ENCODE measurements at regions of chr20 and their contacts with region 1.

Region 1: DNA sequence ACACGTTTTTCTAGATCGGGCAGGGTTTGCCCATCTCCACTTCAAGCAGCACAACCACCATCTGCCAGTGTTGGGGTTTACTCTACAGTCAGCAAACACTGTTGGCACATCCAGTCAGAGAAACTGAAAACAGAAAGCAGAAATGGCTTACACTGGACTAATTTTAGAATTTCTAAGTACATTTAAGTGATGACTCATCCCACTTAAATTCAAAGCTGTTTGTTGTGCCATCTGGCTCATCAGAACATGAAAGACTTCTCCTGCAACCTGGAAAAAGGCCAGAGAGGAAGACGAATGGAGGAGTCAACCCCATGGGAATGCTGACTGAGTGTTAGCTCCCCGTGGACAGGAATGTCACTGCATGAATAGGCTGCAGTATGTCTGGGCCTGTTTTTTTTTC is 21.8 kb downstream of the FAM209B start:
- DNase-seq: no peak

Region 2: GRCh38 chr20:56400090-56400542 is 154.8 kb before region 1 on chr20:
- intact Hi-C with region 1: loop called (anchors 10 kb)
- DNase-seq: no peak

Region 3: GRCh38 chr20:56574531-56575142 is 19.8 kb after region 1 on chr20:
- intact Hi-C with region 1: loop called (anchors 1 kb)
- DNase-seq: no peak

Region 4: GRCh38 chr20:56974499-56975236 is 419.8 kb after region 1 on chr20:
- intact Hi-C with region 1: loop called (anchors 10 kb)
- DNase-seq: no peak

Measured in cardiac septum (tissue), 1 donor.